ENCODE measurements at regions of chr2 and their contacts with region 1.

Region 1: DNA sequence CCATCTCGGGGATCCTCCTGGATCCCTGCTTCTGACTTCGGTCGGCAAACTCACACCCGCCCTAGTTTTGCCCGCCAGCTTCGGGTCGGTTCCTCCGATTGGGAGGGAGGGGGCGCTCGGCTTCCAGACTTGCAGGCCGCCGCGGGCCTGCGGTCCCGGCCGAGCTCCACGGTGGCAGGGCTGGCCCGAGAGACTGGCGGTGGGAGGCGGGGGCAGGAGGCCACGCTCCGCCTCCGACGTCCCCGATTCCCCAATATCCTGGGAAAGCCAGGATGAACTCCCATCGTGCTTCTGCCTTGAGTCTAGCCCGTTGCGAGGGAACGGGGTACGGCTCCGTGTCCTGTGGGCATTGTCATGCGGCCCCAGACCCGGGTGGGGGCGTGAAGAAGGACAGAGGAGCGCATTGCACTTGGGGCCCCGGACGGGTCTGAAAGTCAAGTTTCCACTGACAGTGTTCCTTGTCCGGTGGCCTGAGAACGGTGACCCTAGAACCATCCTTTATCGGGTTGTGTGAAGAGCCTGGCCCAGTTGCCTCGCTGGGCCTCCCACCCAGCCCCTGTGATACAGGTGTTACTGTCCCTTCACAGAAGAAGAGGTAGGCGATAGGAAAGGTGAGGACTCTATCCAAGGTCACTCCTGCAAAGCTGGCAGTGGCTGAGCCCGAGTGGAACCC is 2.4 kb upstream of the INHBB start:
- DNase-seq: peak; percentile 76 to 83
- ATAC-seq: peak; percentile 69 to 70
- H3K4me3 ChIP-seq: peak overlapping the region; percentile 58 to 75 (median 60)
- H3K27ac ChIP-seq: peak overlapping the region in 3 of 4 donors; percentile 52 to 79 (median 63)
- H3K4me1 ChIP-seq: peaks cover 17 to 25% of the 10 kb centered on the region in 2 donors
- H3K27me3 ChIP-seq: peaks cover 23 to 39% (median 38%) of the 10 kb centered on the region in 3 donors
- CTCF ChIP-seq: peak; percentile 89 to 94 (median 93)
- POLR2A ChIP-seq: no peak

Region 2: GRCh38 chr2:120305296-120305695 is 38.3 kb before region 1 on chr2:
- in situ Hi-C with region 1: no loop called
- intact Hi-C with region 1: no loop called
- DNase-seq: no peak
- ATAC-seq: no peak
- H3K4me3 ChIP-seq: no peak overlapping the region
- H3K27ac ChIP-seq: no peak overlapping the region
- H3K4me1 ChIP-seq: no peaks in the 10 kb centered on the region
- H3K27me3 ChIP-seq: no peaks in the 10 kb centered on the region
- CTCF ChIP-seq: no peak
- POLR2A ChIP-seq: no peak

Region 3: GRCh38 chr2:120436885-120437603 is 93.5 kb after region 1 on chr2:
- in situ Hi-C with region 1: loop called in 1 of 4 experiments (anchors 25 kb)
- intact Hi-C with region 1: loop called (anchors 2 kb)
- DNase-seq: peak in 1 of 2 donors; percentile 35
- ATAC-seq: peak in 1 of 2 donors; percentile 53
- H3K4me3 ChIP-seq: no peak overlapping the region
- H3K27ac ChIP-seq: peak overlapping the region in 2 of 4 donors; percentile 10 to 22
- H3K4me1 ChIP-seq: peaks cover 3 to 4% of the 10 kb centered on the region in 2 donors
- H3K27me3 ChIP-seq: peaks cover 9 to 22% (median 12%) of the 10 kb centered on the region in 3 donors
- CTCF ChIP-seq: peak in 4 of 5 experiments; percentile 18 to 49 (median 30)
- POLR2A ChIP-seq: no peak

Region 4: GRCh38 chr2:120503793-120504571 is 160.4 kb after region 1 on chr2:
- in situ Hi-C with region 1: no loop called
- intact Hi-C with region 1: loop called (anchors 1 kb)
- DNase-seq: peak; percentile 96 to 99
- ATAC-seq: peak; percentile 87 to 88
- H3K4me3 ChIP-seq: peak overlapping the region in 1 of 4 donors; percentile 12
- H3K27ac ChIP-seq: peak overlapping the region; percentile 92 to 97 (median 92)
- H3K4me1 ChIP-seq: peaks cover 25% of the 10 kb centered on the region in 2 donors
- H3K27me3 ChIP-seq: no peaks in the 10 kb centered on the region
- CTCF ChIP-seq: peak in 4 of 5 experiments; percentile 19 to 36 (median 22)
- POLR2A ChIP-seq: peak; percentile 40 to 51

Region 5: GRCh38 chr2:121076885-121077549 is 733.4 kb after region 1 on chr2:
- in situ Hi-C with region 1: loop called in 1 of 4 experiments (anchors 25 kb)
- intact Hi-C with region 1: no loop called
- DNase-seq: peak; percentile 28 to 51
- ATAC-seq: peak; percentile 31 to 48
- H3K4me3 ChIP-seq: no peak overlapping the region
- H3K27ac ChIP-seq: no peak overlapping the region
- H3K4me1 ChIP-seq: no peaks in the 10 kb centered on the region
- H3K27me3 ChIP-seq: peaks cover 12 to 19% (median 14%) of the 10 kb centered on the region in 3 donors
- CTCF ChIP-seq: peak; percentile 64 to 94 (median 86)
- POLR2A ChIP-seq: no peak

Measured in gastrocnemius medialis (tissue), 4 donors.